ENCODE measurements at regions of chr2 and their contacts with region 1.

Region 1: DNA sequence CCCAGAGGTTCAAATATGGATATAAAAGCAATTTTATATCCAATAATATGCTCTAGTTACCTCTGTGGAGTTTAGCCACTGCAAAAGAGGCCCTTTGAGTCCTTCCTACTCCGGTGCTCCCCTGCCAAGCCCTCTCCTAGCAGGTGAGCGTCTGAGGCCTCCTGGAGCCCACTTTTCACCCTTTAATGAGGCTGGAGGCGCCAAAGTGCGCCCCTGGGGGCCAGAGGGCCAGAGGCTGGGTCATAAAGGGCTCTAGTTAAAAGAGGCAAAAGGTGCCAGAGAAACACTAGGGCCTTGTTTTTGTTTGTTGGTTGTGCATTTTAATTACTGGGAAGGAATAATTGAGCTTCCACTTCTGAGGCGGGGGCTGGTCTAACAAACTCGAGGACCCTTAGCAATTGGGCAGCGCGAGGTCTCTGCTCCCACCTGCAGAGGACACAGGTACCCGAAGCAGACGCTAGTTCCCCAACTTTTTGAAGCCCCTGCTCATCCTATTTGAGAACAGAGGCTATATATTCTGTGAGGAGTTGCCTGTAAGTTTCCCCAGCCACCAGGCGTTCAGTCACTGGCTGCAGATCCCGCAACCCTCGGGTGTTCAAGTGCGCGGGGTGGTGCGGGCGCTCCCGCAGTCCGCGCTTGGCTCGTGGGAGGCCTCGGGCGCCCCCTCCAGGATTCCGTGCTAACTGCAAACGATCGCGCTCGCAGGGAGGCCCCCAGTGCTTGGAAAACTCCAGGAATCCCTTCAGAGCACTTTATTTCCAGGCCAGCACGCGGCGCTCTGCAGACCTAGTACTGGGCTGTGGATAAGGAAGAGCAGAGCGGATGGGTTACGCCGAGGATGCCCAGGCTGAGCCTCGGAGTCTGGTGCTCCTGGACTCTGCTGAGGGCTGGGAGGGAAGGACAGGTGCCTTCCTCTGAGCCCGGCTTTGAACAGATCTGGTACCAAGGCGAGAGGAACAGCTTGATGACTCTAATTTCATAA is 14.1 kb downstream of the MSGN1 start:
- DNase-seq: peak; percentile 27
- H3K4me3 ChIP-seq: peak overlapping the region; percentile 18
- CTCF ChIP-seq: peak; percentile 91

Region 2: GRCh38 chr2:18149645-18150246 is 319.4 kb after region 1 on chr2:
- in situ Hi-C with region 1: loop called (anchors 25 kb)
- DNase-seq: peak; percentile 55
- H3K4me3 ChIP-seq: no peak overlapping the region
- CTCF ChIP-seq: peak; percentile 84

Measured in astrocyte of the cerebellum (primary cell).